HEK293 (cell line): ENCODE measurements at regions of chr1 and their contacts with region 1.

Region 1: DNA sequence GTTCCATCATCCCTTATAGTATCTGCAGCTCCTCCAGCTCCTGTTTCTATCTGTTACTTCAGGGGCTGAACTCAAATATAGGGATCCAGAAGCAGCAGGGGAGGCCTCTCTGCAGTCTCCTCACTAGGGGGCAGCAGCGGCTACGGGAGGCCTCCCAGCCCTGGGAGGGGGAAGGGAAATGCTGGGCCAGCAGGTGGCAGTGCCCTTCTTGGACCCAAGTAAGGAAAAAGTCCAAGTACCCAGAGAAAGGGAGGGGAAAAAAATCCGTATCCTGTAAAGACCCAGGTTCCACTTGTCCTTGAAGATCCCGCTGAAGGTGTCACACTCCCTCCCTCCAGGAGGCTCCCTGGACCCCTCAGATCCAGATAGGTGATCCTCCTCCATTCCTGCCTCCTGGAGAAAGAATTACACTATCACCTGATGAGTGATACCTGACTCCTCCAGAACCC is 14.1 kb upstream of the NUAK2 start:
- H3K4me3 ChIP-seq: no peak overlapping the region
- H3K27ac ChIP-seq: no peak overlapping the region
- H3K4me1 ChIP-seq: 0 out of 2 replicates have a peak, but pooled peaks cover 2% of the 10 kb centered on the region
- CTCF ChIP-seq: peak; percentile 97

Region 2: DNA sequence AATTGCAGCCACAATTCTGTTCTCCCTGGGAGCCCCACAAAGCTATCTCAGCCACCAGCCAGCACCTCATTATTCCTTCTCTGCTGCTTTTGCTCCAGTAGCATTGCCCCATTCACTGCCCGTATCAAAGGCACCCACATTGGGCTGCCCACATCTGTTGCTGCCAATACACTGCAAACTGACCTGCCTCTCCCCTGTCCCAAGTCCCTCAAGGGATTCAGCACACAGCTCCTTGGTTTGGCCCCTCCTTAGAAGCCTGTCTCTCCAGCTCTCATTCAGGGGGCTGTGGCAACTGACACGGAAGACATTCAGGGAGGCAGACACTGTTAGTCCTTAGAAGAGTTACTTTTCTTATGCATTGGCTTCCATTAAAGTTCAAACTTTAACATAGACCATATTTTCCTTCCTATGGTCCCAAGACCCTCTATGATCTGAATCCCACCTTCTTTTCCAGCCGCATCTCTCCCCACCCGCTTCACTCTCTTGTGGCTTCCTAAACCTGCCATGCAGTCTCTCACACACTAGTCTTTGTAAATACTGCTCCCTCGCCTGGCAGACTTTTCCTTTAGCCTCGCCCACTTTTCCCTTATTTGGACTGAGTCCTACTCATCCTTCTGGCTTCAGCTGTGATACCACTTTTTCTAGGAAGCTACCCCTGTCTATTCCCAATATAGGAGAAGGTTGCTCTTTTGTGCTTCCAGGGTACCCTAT is 40.3 kb after region 1 on chr1:
- CTCF ChIA-PET with region 1: interaction called, 10 read pairs
- POLR2A ChIA-PET with region 1: no interaction called
- H3K4me3 ChIP-seq: no peak overlapping the region
- H3K27ac ChIP-seq: no peak overlapping the region; the same call in 1 of the 2 replicates
- H3K4me1 ChIP-seq: peaks cover 35% of the 10 kb centered on the region
- CTCF ChIP-seq: no peak

Region 3: DNA sequence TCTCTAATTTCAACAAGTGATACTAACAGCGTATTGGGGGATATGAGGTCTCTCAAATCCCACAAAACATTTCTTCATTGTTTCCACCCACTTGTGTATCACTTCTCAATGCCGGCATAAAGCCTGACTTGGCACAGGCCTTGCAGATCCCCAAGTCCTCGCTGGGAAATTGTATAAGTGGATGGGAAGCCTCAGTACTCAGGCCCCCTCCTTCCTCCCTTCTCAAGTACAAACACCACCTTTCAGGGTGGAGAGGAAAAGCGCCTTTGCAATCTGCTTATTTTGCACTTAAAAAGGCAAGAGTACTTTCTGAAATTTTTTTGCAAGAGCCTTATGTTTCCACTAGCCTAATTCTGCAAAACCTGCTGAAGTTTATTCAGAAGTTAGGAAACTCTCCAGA is 46.9 kb after region 1 on chr1:
- CTCF ChIA-PET with region 1: interaction called, 11 read pairs
- POLR2A ChIA-PET with region 1: no interaction called
- H3K4me3 ChIP-seq: no peak overlapping the region
- H3K27ac ChIP-seq: no peak overlapping the region
- H3K4me1 ChIP-seq: no peaks in the 10 kb centered on the region
- CTCF ChIP-seq: no peak

Region 4: DNA sequence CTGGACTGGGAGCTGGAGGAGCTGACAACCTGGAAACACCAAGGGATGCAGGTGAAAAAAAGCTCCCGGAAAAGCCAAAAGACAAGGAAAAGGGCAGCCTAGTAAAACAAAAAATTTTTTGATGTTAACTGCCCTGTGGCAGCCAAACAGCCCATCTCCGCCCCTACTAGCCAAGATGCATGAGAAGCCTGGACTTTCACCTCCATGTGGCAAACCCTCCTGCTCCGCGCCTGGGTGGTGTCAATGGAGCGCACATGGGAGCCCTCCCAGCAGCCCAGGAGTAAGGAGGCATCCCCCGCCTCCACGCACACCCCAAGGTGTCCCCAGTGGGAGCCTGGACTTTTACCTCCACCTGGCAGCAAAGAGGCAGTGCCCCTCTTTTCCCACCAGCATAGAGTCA is 55.7 kb after region 1 on chr1:
- CTCF ChIA-PET with region 1: interaction called, 14 read pairs
- POLR2A ChIA-PET with region 1: no interaction called
- H3K4me3 ChIP-seq: no peak overlapping the region
- H3K27ac ChIP-seq: no peak overlapping the region
- H3K4me1 ChIP-seq: no peaks in the 10 kb centered on the region
- CTCF ChIP-seq: no peak